ENCODE measurements at regions of chr5 and their contacts with region 1.

Region 1: GRCh38 chr5:76771705-76772405 is 47.0 kb upstream of the F2RL1 start:
- DNase-seq: no peak
- ATAC-seq: peak; percentile 53
- H3K4me3 ChIP-seq: no peak overlapping the region
- H3K27ac ChIP-seq: no peak overlapping the region
- H3K4me1 ChIP-seq: peaks cover 0 to 11% of the 10 kb centered on the region in 2 donors
- H3K27me3 ChIP-seq: no peaks in the 10 kb centered on the region
- CTCF ChIP-seq: no peak

Region 2: DNA sequence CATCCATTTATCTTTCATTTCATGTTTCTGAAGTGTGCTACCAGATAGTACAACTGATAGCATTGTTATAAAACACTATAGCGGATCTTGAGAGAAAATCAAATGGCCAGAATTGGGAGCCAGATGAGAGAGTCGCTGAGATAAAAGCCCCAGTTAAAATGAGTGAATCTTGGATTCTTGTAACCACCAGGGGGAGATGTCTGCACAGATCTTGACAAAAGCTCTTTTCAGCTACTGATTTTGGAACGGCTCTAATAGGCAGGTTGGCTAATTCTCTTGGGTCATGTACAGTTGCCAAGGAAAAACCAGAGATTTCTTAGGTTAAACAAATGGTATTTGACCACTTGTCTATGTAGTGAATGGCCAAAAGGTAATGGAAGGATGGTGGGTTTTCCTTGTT is 170.4 kb before region 1 on chr5:
- intact Hi-C with region 1: loop called in 1 of 2 experiments (anchors 5 kb)
- DNase-seq: peak in 2 of 4 donors; percentile 44 to 67
- ATAC-seq: peak; percentile 86
- H3K4me3 ChIP-seq: no peak overlapping the region
- H3K27ac ChIP-seq: no peak overlapping the region
- H3K4me1 ChIP-seq: no peaks in the 10 kb centered on the region
- H3K27me3 ChIP-seq: no peaks in the 10 kb centered on the region
- CTCF ChIP-seq: peak; percentile 59 to 67

Region 3: DNA sequence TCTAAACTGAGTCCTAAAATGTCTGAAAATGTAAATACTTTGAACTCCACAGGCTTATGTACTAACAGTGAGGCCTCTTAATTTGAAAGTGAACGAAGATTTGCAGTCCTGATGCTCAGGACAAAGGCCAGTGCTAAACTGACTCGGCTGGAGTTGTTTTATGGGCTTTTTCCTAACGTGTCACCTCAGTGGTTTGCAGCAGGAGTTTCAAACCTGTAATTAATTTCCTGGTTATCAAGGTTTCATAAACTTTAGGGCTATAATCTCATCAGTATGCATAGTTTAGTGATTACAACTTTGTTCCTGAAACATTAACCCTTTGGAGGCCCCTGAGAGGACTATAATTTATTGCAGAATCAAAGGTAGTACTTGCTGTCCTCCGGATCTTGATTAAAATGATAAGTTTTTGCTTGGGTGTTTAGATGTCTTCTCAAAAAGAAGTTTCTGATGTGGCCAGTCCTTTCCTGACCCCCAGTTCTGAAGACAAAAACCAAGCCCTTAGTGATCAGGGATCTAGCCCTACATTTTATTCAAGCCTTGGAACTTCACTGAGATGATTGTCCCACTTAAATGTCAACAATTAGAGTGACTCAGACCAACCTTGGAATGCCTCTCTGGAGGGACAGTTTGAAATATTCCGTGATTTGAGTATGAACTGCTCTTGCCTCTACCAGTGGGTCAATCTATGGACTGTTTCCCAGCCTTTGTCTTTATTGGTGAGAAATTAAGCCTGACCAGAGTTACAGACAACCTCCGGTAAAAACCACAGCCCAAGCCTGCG is 66.8 kb after region 1 on chr5:
- intact Hi-C with region 1: no loop called
- DNase-seq: no peak
- ATAC-seq: no peak
- H3K4me3 ChIP-seq: no peak overlapping the region
- H3K27ac ChIP-seq: no peak overlapping the region
- H3K4me1 ChIP-seq: no peaks in the 10 kb centered on the region
- H3K27me3 ChIP-seq: no peaks in the 10 kb centered on the region
- CTCF ChIP-seq: no peak